Dorsolateral prefrontal cortex (tissue), 120 donors: ENCODE measurements at regions of chr9 and their contacts with region 1.

Region 1: GRCh38 chr9:128892317-128892921 is 10.5 kb downstream of the LRRC8A start:
- DNase-seq: peak; percentile 44 to 93 (median 91)
- H3K4me3 ChIP-seq: peak overlapping the region in 50 of 59 donors; percentile 0 to 55 (median 26)
- H3K27ac ChIP-seq: peak overlapping the region; percentile 87 to 100 (median 98)
- H3K27me3 ChIP-seq: no peaks in the 10 kb centered on the region
- CTCF ChIP-seq: peak in 4 of 56 donors; percentile 3 to 13 (median 10)

Region 2: DNA sequence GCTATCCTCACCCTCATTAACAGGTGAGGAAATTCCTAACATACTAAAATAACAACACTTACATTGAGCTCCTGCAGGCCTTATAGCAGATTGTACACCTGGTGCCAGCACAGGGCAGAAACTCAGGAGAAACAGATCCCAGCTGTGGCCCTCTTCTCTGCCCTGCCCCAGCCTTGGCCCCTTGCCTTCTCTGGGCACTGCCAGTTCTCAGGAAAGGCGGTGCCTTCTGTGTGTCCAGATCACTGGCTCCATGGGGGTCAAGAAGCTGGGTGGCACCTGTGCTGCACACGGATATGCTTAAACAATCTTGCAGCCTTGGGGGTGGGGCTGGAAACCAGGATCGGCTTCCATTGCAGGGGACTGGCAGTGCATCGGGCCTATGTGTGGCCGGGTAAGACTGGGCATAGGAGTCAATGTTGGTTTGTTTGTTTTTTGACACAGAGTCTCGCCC is 30.0 kb before region 1 on chr9:
- intact Hi-C with region 1: no loop called
- DNase-seq: peak in 1 of 10 donors; percentile 45
- H3K4me3 ChIP-seq: no peak overlapping the region
- H3K27ac ChIP-seq: peak overlapping the region in 35 of 59 donors; percentile 22 to 85 (median 69)
- H3K27me3 ChIP-seq: no peaks in the 10 kb centered on the region
- CTCF ChIP-seq: no peak

Region 3: GRCh38 chr9:128917151-128917849 is 24.9 kb after region 1 on chr9:
- intact Hi-C with region 1: loop called in 1 of 2 experiments (anchors 1 kb)
- DNase-seq: peak in 6 of 10 donors; percentile 44 to 76 (median 64)
- H3K4me3 ChIP-seq: no peak overlapping the region
- H3K27ac ChIP-seq: peak overlapping the region; percentile 38 to 96 (median 87)
- H3K27me3 ChIP-seq: no peaks in the 10 kb centered on the region
- CTCF ChIP-seq: peak in 1 of 56 donors; percentile 8

Region 4: GRCh38 chr9:129058965-129059795 is 166.8 kb after region 1 on chr9:
- intact Hi-C with region 1: no loop called
- DNase-seq: no peak
- H3K4me3 ChIP-seq: no peak overlapping the region
- H3K27ac ChIP-seq: no peak overlapping the region
- H3K27me3 ChIP-seq: no peaks in the 10 kb centered on the region
- CTCF ChIP-seq: no peak